CD4-positive, alpha-beta T cell (primary cell): ENCODE measurements at regions of chr9 and their contacts with region 1.

Region 1: GRCh38 chr9:15510789-15511575 is at the start of gene PSIP1:
- DNase-seq: peak; percentile 72 to 94 (median 84)
- ATAC-seq: peak; percentile 85
- H3K4me3 ChIP-seq: peak within 1 kb of the TSS; percentile 73
- H3K4me3 Mint-ChIP-seq: peak within 1 kb of the TSS; percentile 92
- H3K27ac ChIP-seq: peak within 1 kb of the TSS; percentile 89 to 90
- H3K27ac Mint-ChIP-seq: peak within 1 kb of the TSS; percentile 99
- H3K4me1 ChIP-seq: peaks cover 14% of the 10 kb centered on the region
- H3K4me1 Mint-ChIP-seq: peaks cover 75% of the 10 kb centered on the region
- H3K27me3 ChIP-seq: no peaks in the 10 kb centered on the region
- H3K27me3 Mint-ChIP-seq: no peaks in the 10 kb centered on the region
- CTCF ChIP-seq: no peak
- total RNA-seq, gene PSIP1: 127 to 132 TPM

Region 2: GRCh38 chr9:15295761-15296405 is 215.1 kb before region 1 on chr9:
- CTCF ChIA-PET with region 1: no interaction called
- POLR2A ChIA-PET with region 1: interaction called, 15 read pairs
- intact Hi-C with region 1: loop called in 1 of 2 experiments (anchors 5 kb)
- DNase-seq: peak in 4 of 14 experiments; percentile 28 to 87 (median 69)
- ATAC-seq: peak; percentile 39
- H3K4me3 ChIP-seq: peak overlapping the region; percentile 54
- H3K4me3 Mint-ChIP-seq: peak overlapping the region; percentile 81
- H3K27ac ChIP-seq: peak overlapping the region; percentile 87 to 88
- H3K27ac Mint-ChIP-seq: peak overlapping the region; percentile 97
- H3K4me1 ChIP-seq: peaks cover 80% of the 10 kb centered on the region
- H3K4me1 Mint-ChIP-seq: peaks cover 88% of the 10 kb centered on the region
- H3K27me3 ChIP-seq: no peaks in the 10 kb centered on the region
- H3K27me3 Mint-ChIP-seq: no peaks in the 10 kb centered on the region
- CTCF ChIP-seq: no peak

Region 3: GRCh38 chr9:15422372-15423230 is 88.4 kb before region 1 on chr9 and contains the start of gene SNAPC3:
- CTCF ChIA-PET with region 1: interaction called, 3 read pairs
- POLR2A ChIA-PET with region 1: interaction called, 33 read pairs
- intact Hi-C with region 1: loop called (anchors 1 to 2 kb)
- DNase-seq: peak; percentile 82 to 96 (median 90)
- ATAC-seq: peak; percentile 97
- H3K4me3 ChIP-seq: peak within 1 kb of the TSS; percentile 89
- H3K4me3 Mint-ChIP-seq: peak within 1 kb of the TSS; percentile 96
- H3K27ac ChIP-seq: peak within 1 kb of the TSS; percentile 70 to 82
- H3K27ac Mint-ChIP-seq: peak within 1 kb of the TSS; percentile 96
- H3K4me1 ChIP-seq: peaks cover 21% of the 10 kb centered on the region
- H3K4me1 Mint-ChIP-seq: peaks cover 51% of the 10 kb centered on the region
- H3K27me3 ChIP-seq: no peaks in the 10 kb centered on the region
- H3K27me3 Mint-ChIP-seq: no peaks in the 10 kb centered on the region
- CTCF ChIP-seq: no peak
- total RNA-seq, gene SNAPC3: 3.3 to 4.7 TPM

Region 4: GRCh38 chr9:15475923-15476536 is 35.0 kb before region 1 on chr9:
- CTCF ChIA-PET with region 1: no interaction called
- POLR2A ChIA-PET with region 1: interaction called, 11 read pairs
- intact Hi-C with region 1: loop called in 1 of 2 experiments (anchors 5 kb)
- DNase-seq: no peak
- ATAC-seq: no peak
- H3K4me3 ChIP-seq: no peak overlapping the region
- H3K4me3 Mint-ChIP-seq: no peak overlapping the region
- H3K27ac ChIP-seq: no peak overlapping the region
- H3K27ac Mint-ChIP-seq: no peak overlapping the region
- H3K4me1 ChIP-seq: no peaks in the 10 kb centered on the region
- H3K4me1 Mint-ChIP-seq: peaks cover 17% of the 10 kb centered on the region
- H3K27me3 ChIP-seq: no peaks in the 10 kb centered on the region
- H3K27me3 Mint-ChIP-seq: no peaks in the 10 kb centered on the region
- CTCF ChIP-seq: no peak

Region 5: GRCh38 chr9:15522130-15522755 is 11.3 kb after region 1 on chr9:
- CTCF ChIA-PET with region 1: no interaction called
- POLR2A ChIA-PET with region 1: interaction called, 13 read pairs
- intact Hi-C with region 1: no loop called
- DNase-seq: no peak
- ATAC-seq: no peak
- H3K4me3 ChIP-seq: no peak overlapping the region
- H3K4me3 Mint-ChIP-seq: no peak overlapping the region
- H3K27ac ChIP-seq: no peak overlapping the region
- H3K27ac Mint-ChIP-seq: no peak overlapping the region
- H3K4me1 ChIP-seq: no peaks in the 10 kb centered on the region
- H3K4me1 Mint-ChIP-seq: no peaks in the 10 kb centered on the region
- H3K27me3 ChIP-seq: no peaks in the 10 kb centered on the region
- H3K27me3 Mint-ChIP-seq: no peaks in the 10 kb centered on the region
- CTCF ChIP-seq: no peak

Region 6: GRCh38 chr9:15552636-15553527 is 41.9 kb after region 1 on chr9 and contains the start of gene CCDC171:
- CTCF ChIA-PET with region 1: interaction called, 4 read pairs
- POLR2A ChIA-PET with region 1: interaction called, 122 read pairs
- intact Hi-C with region 1: loop called (anchors 1 to 2 kb)
- DNase-seq: peak; percentile 70 to 96 (median 80)
- ATAC-seq: peak; percentile 85
- H3K4me3 ChIP-seq: peak within 1 kb of the TSS; percentile 97
- H3K4me3 Mint-ChIP-seq: peak within 1 kb of the TSS; percentile 95
- H3K27ac ChIP-seq: no peak within 1 kb of the TSS
- H3K27ac Mint-ChIP-seq: peak within 1 kb of the TSS; percentile 80
- H3K4me1 ChIP-seq: peaks cover 21% of the 10 kb centered on the region
- H3K4me1 Mint-ChIP-seq: peaks cover 15% of the 10 kb centered on the region
- H3K27me3 ChIP-seq: no peaks in the 10 kb centered on the region
- H3K27me3 Mint-ChIP-seq: no peaks in the 10 kb centered on the region
- CTCF ChIP-seq: no peak
- total RNA-seq, gene CCDC171: 0.49 to 1.1 TPM